Activated naive CD4-positive, alpha-beta T cell treated with anti-CD3 and anti-CD28 coated beads, Interleukin-2, amount 10 ng/mL, durations not matched to agents 7 days and 5 days (primary cell): ENCODE measurements at regions of chr16 and their contacts with region 1.

Region 1: DNA sequence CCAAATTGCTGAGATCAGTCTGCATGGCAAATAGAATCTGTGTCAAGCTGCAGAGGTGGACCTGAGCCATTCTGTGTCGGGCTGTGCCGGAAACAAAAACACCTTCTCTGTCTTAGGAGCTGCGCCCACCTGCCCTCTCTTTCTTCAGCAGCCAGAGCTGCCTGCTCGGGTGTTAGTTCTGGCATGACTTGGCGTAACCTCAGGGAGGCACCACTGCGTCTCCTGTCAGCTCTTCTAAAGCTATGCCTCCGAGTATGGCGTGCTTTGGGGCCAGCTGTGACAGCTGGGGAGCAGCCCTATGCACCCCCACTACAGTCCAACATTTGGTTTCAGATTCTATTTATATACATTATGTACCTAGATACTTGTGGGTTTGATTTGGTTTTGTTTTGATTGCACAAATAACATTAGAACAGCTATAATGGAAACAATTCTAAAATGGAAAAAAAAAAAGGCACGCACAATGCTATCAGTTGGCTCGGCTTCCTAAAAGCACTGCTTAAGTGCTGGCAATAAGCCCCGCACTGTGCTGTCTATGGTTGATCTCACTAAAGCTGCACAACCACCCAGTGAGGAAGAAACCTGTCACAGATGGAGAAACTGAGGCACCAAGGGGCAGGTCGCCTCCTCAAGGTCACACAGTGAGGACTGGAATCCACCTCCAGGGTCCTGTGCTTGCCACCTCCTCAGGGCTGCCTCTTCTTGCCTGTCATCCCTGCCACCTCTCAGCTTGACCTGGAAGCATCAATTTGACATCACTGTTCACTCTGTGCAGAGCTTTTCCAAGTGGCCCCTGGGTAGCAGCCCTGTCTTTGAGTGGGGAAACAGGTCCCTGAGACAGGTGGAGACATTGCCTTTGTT is 18.7 kb upstream of the ADGRG1 start:
- DNase-seq: peak; percentile 83
- H3K4me3 Mint-ChIP-seq: peak overlapping the region; percentile 46
- H3K27ac Mint-ChIP-seq: peak overlapping the region; percentile 86
- H3K4me1 Mint-ChIP-seq: peaks cover 49% of the 10 kb centered on the region
- H3K27me3 Mint-ChIP-seq: peaks cover 5% of the 10 kb centered on the region

Region 2: GRCh38 chr16:57555831-57556230 is 53.9 kb before region 1 on chr16:
- CTCF ChIA-PET with region 1: no interaction called
- DNase-seq: no peak
- H3K4me3 Mint-ChIP-seq: no peak overlapping the region
- H3K27ac Mint-ChIP-seq: no peak overlapping the region
- H3K4me1 Mint-ChIP-seq: peaks cover 6% of the 10 kb centered on the region
- H3K27me3 Mint-ChIP-seq: peaks cover 20% of the 10 kb centered on the region

Region 3: DNA sequence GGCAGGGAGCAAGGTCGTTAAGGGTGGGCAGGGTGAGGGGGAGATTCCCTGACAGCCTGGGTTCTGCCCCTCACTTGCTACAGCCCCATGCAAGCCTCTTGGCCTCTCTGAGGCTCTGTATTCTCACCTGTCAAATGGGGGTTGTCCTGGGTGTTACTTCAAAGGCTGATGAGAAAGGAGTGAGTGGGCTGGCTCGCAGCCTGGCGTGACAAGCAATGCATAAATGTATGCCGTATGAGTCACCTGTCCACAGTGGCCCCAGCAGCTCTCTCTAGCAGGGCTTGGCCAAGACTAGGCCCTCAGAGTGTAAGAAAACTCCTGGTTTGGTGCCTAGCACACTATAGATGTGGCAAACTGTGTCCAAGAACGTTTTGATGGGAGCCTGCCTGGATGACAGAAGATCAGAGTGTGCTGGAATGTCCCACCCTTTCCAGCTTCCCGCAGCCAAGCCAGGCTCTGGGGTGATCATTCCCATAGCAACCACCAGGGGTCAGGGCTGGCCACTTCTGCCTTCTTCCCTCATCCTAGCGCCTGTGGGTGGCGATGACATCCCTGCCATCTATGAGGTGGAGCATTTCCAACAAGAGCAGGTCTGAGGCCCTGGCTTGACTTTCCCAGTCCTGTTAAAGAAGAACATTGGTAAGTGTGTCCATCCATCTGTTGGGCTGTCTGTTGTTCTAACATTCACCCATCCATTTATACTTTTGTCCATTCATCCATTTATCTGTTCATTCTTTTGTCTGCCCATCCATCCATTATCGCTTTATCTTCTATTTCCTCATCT is 18.5 kb before region 1 on chr16:
- CTCF ChIA-PET with region 1: interaction called, 38 read pairs
- DNase-seq: peak; percentile 80
- H3K4me3 Mint-ChIP-seq: peak overlapping the region; percentile 6
- H3K27ac Mint-ChIP-seq: peak overlapping the region; percentile 87
- H3K4me1 Mint-ChIP-seq: peaks cover 51% of the 10 kb centered on the region
- H3K27me3 Mint-ChIP-seq: peaks cover 24% of the 10 kb centered on the region

Region 4: DNA sequence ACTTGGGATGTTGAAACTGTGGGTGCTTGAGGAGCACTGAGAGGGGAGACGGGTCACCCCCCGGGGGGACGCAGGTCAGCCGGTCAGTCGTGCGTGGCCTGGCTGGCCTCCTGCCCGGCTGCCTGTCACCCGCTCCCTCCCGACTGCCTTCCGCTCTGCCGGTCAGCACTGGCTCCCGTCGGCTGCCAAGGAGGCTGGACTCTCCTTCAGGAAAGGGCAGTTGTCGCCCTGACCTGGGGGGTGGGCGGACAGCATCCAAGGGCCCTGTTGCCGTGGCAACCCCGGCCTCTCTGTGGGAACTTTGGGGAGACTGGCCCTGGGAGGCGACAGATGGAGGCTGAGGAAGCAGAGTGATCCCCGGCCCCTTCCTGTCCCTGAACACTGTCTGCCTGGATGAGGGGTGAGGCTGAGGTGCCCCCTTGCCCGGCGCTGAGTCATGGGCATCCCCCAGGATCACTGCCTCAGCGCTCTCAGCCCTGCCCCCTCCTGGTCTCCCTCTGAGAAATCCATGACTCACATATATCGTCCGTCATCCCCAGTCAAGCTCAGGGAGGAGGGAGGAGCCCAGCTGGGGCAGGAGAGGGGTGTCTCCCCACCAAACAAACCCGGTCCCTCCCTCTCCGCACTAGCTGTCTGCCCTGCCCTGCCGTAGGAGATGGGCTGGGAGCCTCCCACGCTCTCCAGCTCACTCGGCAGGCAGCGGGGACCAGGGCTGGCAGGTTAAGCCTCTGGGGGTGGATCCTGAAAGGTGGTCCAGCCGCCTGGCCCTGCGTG is 18.4 kb after region 1 on chr16 and contains the start of gene ADGRG1:
- CTCF ChIA-PET with region 1: interaction called, 18 read pairs
- DNase-seq: peak; percentile 62
- H3K4me3 Mint-ChIP-seq: peak within 1 kb of the TSS; percentile 5
- H3K27ac Mint-ChIP-seq: no peak within 1 kb of the TSS
- H3K4me1 Mint-ChIP-seq: peaks cover 14% of the 10 kb centered on the region
- H3K27me3 Mint-ChIP-seq: peaks cover 97% of the 10 kb centered on the region

Region 5: DNA sequence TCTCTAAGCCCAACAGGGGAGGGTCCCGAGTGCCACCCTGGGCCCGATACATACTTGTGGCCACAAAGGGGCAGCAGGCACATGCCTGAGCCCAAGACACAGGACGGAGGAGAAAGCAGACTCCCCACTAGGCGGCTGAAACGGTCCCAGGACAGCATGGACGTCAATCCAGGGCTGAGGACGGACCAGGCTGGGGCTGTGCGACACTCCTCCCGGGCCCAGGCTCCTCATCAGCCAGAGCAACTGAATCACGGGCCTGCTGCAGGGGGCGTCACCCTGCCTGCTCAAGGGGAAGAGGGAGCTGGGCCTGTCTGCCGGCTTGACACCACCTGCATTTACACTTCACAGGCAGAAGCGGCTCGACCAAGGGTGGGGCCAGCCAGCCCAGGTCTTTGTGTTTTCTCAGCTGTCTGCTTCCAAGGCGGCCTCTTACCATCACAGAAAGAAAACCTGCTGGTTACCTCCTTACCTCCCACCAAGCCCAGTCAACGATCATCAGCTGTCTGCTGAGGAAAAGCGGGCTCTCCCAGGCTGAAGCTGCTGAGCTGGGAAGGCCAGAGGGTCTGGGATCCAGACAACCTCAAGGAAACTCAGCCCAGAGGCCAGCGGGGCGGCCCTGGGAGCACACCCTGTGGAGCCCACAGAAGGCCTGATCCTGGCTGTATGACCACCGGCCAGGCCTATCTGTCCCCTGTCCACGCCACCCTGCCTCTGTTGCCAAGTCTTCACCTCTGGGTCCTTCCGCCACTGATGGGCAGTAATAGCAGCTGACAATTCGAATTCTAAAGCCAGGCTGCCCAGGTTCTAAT is 166.1 kb after region 1 on chr16:
- CTCF ChIA-PET with region 1: no interaction called
- DNase-seq: no peak
- H3K4me3 Mint-ChIP-seq: no peak overlapping the region
- H3K27ac Mint-ChIP-seq: no peak overlapping the region
- H3K4me1 Mint-ChIP-seq: no peaks in the 10 kb centered on the region
- H3K27me3 Mint-ChIP-seq: peaks cover 5% of the 10 kb centered on the region

Region 6: GRCh38 chr16:57826706-57827625 is 217.2 kb after region 1 on chr16:
- CTCF ChIA-PET with region 1: no interaction called
- DNase-seq: no peak
- H3K4me3 Mint-ChIP-seq: no peak overlapping the region
- H3K27ac Mint-ChIP-seq: no peak overlapping the region
- H3K4me1 Mint-ChIP-seq: no peaks in the 10 kb centered on the region
- H3K27me3 Mint-ChIP-seq: peaks cover 56% of the 10 kb centered on the region